Panc1 (cell line): ENCODE measurements at regions of chr7 and their contacts with region 1.

Region 1: DNA sequence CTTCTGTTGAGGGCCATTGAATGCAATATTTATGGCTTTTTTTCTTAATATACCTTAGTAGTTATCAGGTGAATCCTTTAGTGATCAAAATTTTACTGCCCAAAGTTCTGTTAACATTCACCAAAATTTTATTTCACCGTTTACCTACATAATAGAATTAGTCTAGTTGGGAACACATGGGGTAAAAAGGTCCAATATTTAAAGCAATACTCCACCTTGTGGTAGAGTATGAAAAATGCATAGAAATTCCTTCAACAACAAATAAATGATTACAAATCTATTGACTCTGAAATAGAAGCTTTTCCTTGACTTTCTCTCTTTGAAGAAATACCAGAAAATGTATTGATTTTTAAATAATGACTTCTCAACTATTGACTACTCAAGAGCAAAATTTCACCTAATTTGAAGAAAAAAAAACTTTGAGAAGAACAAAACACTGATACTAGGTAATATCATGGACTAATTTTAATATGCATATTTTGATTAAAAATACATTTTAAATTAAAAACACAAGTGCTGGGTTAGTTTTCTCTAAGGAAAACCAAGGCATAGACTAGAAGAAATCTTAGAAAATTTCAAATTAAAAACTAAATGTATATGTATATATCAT is 43.3 kb downstream of the POLR1F start:
- DNase-seq: no peak
- ATAC-seq: peak; percentile 72
- H3K4me3 ChIP-seq: no peak overlapping the region
- H3K27ac ChIP-seq: peak overlapping the region; percentile 74; the same call in 1 of the 2 replicates
- H3K4me1 ChIP-seq: peaks cover 17% of the 10 kb centered on the region
- H3K27me3 ChIP-seq: no peaks in the 10 kb centered on the region
- CTCF ChIP-seq: peak; percentile 72; the same call in 1 of the 2 replicates

Region 2: DNA sequence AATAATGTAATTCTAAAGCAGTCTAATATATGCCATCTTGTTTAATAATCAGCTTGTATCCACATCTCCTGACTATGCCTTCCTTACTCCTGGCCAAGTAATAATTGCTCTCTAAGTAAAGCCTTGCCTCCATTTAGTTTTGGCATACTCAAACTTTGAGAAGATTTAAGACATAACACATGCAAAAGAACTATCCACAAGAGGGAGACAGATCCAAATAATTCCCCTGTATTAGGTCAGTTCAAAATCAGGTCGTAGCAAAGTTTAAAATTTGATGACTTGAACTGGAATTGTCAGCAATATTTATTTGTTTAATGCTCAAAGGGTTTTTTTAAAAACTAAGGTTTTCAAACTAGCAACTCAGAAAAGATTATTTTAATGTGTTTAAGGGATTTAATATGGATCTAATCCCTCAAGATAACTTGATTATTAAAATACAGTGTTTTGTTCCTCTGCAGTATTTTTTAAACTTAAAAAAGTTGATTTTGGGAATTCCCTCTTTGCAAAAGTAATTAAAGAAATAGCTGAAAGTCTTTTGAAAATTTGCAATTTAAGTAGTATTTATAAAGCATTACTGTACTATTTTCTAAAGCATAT is 1074.7 kb before region 1 on chr7:
- CTCF ChIA-PET with region 1: no interaction called
- POLR2A ChIA-PET with region 1: no interaction called
- in situ Hi-C with region 1: no loop called
- intact Hi-C with region 1: loop called (anchors 5 kb)
- DNase-seq: peak; percentile 45
- ATAC-seq: peak; percentile 87
- H3K4me3 ChIP-seq: no peak overlapping the region
- H3K27ac ChIP-seq: no peak overlapping the region; the same call in 1 of the 2 replicates
- H3K4me1 ChIP-seq: no peaks in the 10 kb centered on the region
- H3K27me3 ChIP-seq: no peaks in the 10 kb centered on the region
- CTCF ChIP-seq: peak; percentile 78; the same call in 1 of the 2 replicates

Region 3: DNA sequence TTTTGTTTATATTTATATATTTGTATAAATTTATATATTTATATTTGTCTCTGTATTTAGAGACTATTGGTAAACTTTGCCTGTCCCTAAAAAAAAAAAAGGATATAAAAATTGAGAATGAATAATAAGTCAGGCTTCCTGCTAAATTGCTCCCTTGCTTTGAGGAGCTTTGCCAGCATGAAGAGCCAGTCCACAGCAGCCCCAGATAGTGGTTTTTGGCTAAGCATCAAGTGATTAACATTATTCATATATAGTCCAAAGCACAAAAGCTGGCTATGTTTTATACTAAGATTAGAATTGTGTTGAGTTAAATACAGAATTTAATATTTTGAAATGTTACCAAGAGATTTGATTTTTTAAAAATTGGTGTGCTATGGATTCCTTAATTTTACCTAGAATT is 255.4 kb before region 1 on chr7:
- CTCF ChIA-PET with region 1: no interaction called
- POLR2A ChIA-PET with region 1: no interaction called
- in situ Hi-C with region 1: no loop called
- intact Hi-C with region 1: loop called (anchors 10 kb)
- DNase-seq: no peak
- ATAC-seq: no peak
- H3K4me3 ChIP-seq: no peak overlapping the region
- H3K27ac ChIP-seq: no peak overlapping the region; the same call in 1 of the 2 replicates
- H3K4me1 ChIP-seq: peaks cover 5% of the 10 kb centered on the region; the same call in 1 of the 2 replicates
- H3K27me3 ChIP-seq: no peaks in the 10 kb centered on the region
- CTCF ChIP-seq: no peak

Region 4: GRCh38 chr7:20374392-20374791 is 708.9 kb after region 1 on chr7:
- CTCF ChIA-PET with region 1: no interaction called
- POLR2A ChIA-PET with region 1: no interaction called
- in situ Hi-C with region 1: no loop called
- intact Hi-C with region 1: no loop called
- DNase-seq: no peak
- ATAC-seq: no peak
- H3K4me3 ChIP-seq: no peak overlapping the region
- H3K27ac ChIP-seq: no peak overlapping the region
- H3K4me1 ChIP-seq: no peaks in the 10 kb centered on the region
- H3K27me3 ChIP-seq: no peaks in the 10 kb centered on the region
- CTCF ChIP-seq: no peak